OCI-LY7 (cell line): ENCODE measurements at regions of chr15 and their contacts with region 1.

Region 1: GRCh38 chr15:59116141-59116540 is 11.2 kb downstream of the CCNB2 start:
- DNase-seq: no peak
- H3K4me3 ChIP-seq: no peak overlapping the region
- H3K27ac ChIP-seq: no peak overlapping the region
- H3K4me1 ChIP-seq: no peaks in the 10 kb centered on the region
- CTCF ChIP-seq: no peak

Region 2: DNA sequence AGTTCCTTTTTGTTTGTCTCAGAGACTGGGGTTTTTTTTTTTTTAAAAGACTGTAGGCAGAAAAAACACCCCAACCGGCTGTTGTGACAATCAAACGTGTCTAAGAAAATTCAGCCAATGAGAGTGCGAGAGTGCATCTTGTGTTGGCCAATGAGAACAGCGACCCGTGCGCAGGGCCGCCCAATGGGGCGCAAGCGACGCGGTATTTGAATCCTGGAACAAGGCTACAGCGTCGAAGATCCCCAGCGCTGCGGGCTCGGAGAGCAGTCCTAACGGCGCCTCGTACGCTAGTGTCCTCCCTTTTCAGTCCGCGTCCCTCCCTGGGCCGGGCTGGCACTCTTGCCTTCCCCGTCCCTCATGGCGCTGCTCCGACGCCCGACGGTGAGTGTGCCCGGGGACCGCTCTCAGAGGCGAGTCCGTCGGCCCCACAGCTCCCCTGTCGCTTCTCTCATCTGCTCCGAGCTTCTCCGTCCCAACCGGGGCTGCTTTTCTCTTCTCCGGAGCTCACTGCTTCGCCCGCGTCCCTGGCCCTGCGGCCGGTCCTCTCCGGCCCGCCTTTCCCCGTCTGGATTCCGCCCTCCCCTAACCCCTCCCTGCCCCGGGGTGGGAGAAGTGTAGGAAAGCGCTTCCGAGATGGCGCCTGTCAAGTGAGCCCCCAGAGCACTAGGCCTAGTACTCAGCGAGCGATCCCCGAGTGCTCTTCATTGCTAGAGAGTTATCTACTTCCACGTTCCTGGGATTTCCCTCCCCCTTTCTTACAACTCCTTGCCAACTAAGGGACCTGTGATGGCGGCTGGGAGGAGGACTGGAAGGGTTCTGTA is 11.0 kb before region 1 on chr15 and contains the start of gene CCNB2:
- CTCF ChIA-PET with region 1: no interaction called
- POLR2A ChIA-PET with region 1: interaction called, 13 read pairs
- intact Hi-C with region 1: no loop called
- DNase-seq: peak; percentile 96
- H3K4me3 ChIP-seq: peak within 1 kb of the TSS; percentile 90
- H3K27ac ChIP-seq: peak within 1 kb of the TSS; percentile 83
- H3K4me1 ChIP-seq: peaks cover 20% of the 10 kb centered on the region
- CTCF ChIP-seq: no peak
- total RNA-seq, gene CCNB2: 87.9 and 93.9 TPM in 2 replicates